CD14-positive monocyte (primary cell): ENCODE measurements at regions of chr15 and their contacts with region 1.

Region 1: GRCh38 chr15:29149738-29150075 is 119.9 kb downstream of the NSMCE3 start:
- DNase-seq: no peak
- H3K4me3 ChIP-seq: no peak overlapping the region
- H3K4me3 Mint-ChIP-seq: no peak overlapping the region
- H3K27ac ChIP-seq: no peak overlapping the region
- H3K27ac Mint-ChIP-seq: no peak overlapping the region
- H3K4me1 ChIP-seq: no peaks in the 10 kb centered on the region
- H3K4me1 Mint-ChIP-seq: no peaks in the 10 kb centered on the region
- H3K27me3 ChIP-seq: no peaks in the 10 kb centered on the region
- H3K27me3 Mint-ChIP-seq: peaks cover 2 to 4% (median 2%) of the 10 kb centered on the region in 3 donors
- CTCF ChIP-seq: no peak

Region 2: DNA sequence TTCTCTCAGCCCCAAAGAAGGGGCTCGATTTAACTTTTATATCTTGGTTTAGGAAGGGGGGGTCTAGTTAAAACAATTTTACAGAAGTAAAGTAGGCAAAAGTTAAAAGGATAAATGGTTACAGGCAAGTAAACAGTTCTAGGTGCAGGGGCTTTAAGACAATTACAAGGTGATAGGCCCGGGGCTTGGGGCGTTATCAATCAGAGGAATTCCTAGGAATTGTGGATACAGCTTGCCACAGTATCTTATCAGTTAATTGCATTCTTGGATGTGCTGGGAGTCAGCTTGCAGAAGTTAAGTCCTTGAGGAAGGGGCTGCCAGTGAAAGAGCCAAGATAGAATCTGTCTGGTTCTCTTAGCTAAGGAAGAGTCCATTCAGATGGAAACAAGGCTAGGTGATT is 67.2 kb after region 1 on chr15:
- intact Hi-C with region 1: loop called in 1 of 2 experiments (anchors 10 kb)
- DNase-seq: no peak
- H3K4me3 ChIP-seq: no peak overlapping the region
- H3K4me3 Mint-ChIP-seq: no peak overlapping the region
- H3K27ac ChIP-seq: no peak overlapping the region
- H3K27ac Mint-ChIP-seq: no peak overlapping the region
- H3K4me1 ChIP-seq: no peaks in the 10 kb centered on the region
- H3K4me1 Mint-ChIP-seq: no peaks in the 10 kb centered on the region
- H3K27me3 ChIP-seq: no peaks in the 10 kb centered on the region
- H3K27me3 Mint-ChIP-seq: peaks cover 0 to 4% (median 1%) of the 10 kb centered on the region in 3 donors
- CTCF ChIP-seq: no peak

Region 3: DNA sequence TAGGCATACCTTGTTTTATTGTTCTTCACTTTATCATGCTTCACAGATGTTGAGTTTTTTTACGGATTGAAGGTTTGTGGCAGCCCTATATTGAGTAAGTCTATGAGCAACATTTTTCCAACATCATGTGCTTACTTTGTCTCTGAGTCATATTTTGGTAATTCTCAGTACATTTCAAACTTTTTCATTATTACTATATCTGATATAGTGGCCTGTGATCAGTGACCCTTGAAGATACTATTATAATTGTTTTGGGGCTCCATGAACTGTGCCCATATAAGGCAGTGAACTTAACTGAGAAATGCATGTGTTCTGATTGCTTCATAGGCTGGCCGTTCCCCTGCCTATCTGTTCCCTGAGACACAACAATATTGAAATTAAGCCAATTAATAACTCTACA is 162.7 kb after region 1 on chr15:
- intact Hi-C with region 1: no loop called
- DNase-seq: no peak
- H3K4me3 ChIP-seq: no peak overlapping the region
- H3K4me3 Mint-ChIP-seq: no peak overlapping the region
- H3K27ac ChIP-seq: no peak overlapping the region
- H3K27ac Mint-ChIP-seq: no peak overlapping the region
- H3K4me1 ChIP-seq: no peaks in the 10 kb centered on the region
- H3K4me1 Mint-ChIP-seq: no peaks in the 10 kb centered on the region
- H3K27me3 ChIP-seq: no peaks in the 10 kb centered on the region
- H3K27me3 Mint-ChIP-seq: peaks cover 0 to 3% (median 1%) of the 10 kb centered on the region in 3 donors
- CTCF ChIP-seq: no peak